Endothelial cell of umbilical vein (primary cell): ENCODE measurements at regions of chr6 and their contacts with region 1.

Region 1: DNA sequence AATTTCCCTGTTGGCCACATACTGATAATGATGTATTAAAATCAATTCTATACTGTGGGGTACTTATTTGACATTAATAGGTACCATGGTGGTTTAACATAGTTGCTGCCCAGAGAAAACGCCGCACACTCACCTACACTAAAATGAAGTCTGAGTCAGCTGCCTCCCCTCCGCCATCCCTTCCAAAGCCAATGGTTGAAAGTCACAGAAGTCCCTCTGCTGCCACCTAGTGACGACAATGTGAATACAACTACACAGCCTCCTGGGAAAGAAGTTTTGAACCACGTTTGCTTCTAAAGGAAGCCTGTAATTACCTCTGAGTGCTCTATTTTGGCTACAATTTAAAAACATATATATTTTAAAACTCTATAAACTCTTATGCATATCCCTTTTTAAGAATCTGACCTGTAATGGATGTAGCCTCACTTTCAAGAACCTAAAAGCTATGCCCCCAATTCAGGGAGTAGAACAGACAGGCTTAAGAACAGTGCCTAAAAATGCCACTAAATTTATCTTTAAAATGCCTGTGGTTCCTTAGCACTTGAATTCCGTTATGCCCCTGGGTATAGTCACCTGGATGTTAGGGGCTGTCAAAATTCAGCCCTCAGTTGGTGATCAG is 20.6 kb upstream of the ECI2 start:
- DNase-seq: peak; percentile 84
- H3K4me3 ChIP-seq: no peak overlapping the region
- H3K27ac ChIP-seq: no peak overlapping the region
- H3K4me1 ChIP-seq: peaks cover 2% of the 10 kb centered on the region
- H3K27me3 ChIP-seq: no peaks in the 10 kb centered on the region
- CTCF ChIP-seq: peak; percentile 73 to 77
- POLR2A ChIP-seq: no peak

Region 2: GRCh38 chr6:3868544-3868943 is 287.4 kb before region 1 on chr6:
- CTCF ChIA-PET with region 1: no interaction called
- POLR2A ChIA-PET with region 1: no interaction called
- dilution Hi-C with region 1: no loop called
- intact Hi-C with region 1: no loop called
- DNase-seq: no peak
- H3K4me3 ChIP-seq: no peak overlapping the region
- H3K27ac ChIP-seq: no peak overlapping the region
- H3K4me1 ChIP-seq: peaks cover under 1% of the 10 kb centered on the region
- H3K27me3 ChIP-seq: no peaks in the 10 kb centered on the region
- CTCF ChIP-seq: no peak
- POLR2A ChIP-seq: no peak

Region 3: DNA sequence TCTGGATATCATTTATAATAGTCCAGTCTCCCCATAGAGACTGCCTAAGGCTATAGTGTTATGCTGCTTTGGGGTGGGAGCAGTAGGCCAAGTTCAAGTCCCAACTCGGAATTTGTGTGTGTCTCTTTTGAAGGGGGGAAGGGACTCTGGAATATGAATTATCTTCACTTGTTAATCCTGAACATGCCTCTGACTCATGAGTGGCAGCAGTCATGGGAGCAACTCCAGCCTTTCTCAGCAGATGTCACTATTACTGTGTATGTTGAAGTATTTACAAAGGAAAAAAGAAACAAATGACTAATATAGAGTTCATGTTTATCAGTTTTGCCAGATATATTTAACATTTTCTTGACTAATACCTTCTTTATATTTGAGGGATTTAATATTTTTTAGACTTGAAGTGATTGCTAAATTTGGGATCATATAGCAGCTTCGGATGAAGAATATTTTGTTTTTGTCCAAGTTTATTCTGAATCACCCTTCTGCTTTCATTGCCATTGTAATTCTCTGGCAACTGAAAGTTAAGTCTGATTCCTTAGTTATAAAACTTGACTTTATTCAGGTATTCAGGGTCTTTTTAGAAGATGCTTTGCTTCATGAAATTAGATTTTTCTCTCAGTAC is 100.4 kb before region 1 on chr6:
- CTCF ChIA-PET with region 1: interaction called, 120 read pairs
- POLR2A ChIA-PET with region 1: no interaction called
- dilution Hi-C with region 1: no loop called
- intact Hi-C with region 1: loop called (anchors 1 kb)
- DNase-seq: peak; percentile 92
- H3K4me3 ChIP-seq: no peak overlapping the region
- H3K27ac ChIP-seq: peak overlapping the region; percentile 41
- H3K4me1 ChIP-seq: peaks cover 22% of the 10 kb centered on the region
- H3K27me3 ChIP-seq: no peaks in the 10 kb centered on the region
- CTCF ChIP-seq: peak; percentile 44 to 59
- POLR2A ChIP-seq: no peak

Region 4: GRCh38 chr6:4102687-4103244 is 53.2 kb before region 1 on chr6:
- CTCF ChIA-PET with region 1: interaction called, 3 read pairs
- POLR2A ChIA-PET with region 1: no interaction called
- dilution Hi-C with region 1: no loop called
- intact Hi-C with region 1: loop called (anchors 10 kb)
- DNase-seq: no peak
- H3K4me3 ChIP-seq: no peak overlapping the region
- H3K27ac ChIP-seq: no peak overlapping the region
- H3K4me1 ChIP-seq: no peaks in the 10 kb centered on the region
- H3K27me3 ChIP-seq: no peaks in the 10 kb centered on the region
- CTCF ChIP-seq: no peak
- POLR2A ChIP-seq: no peak

Region 5: GRCh38 chr6:4125936-4126864 is 29.8 kb before region 1 on chr6:
- CTCF ChIA-PET with region 1: interaction called, 59 read pairs
- POLR2A ChIA-PET with region 1: no interaction called
- dilution Hi-C with region 1: no loop called
- intact Hi-C with region 1: loop called (anchors 1 kb)
- DNase-seq: peak; percentile 83
- H3K4me3 ChIP-seq: no peak overlapping the region
- H3K27ac ChIP-seq: peak overlapping the region; percentile 54
- H3K4me1 ChIP-seq: peaks cover 50% of the 10 kb centered on the region
- H3K27me3 ChIP-seq: no peaks in the 10 kb centered on the region
- CTCF ChIP-seq: peak; percentile 23 to 28
- POLR2A ChIP-seq: peak; percentile 38

Region 6: DNA sequence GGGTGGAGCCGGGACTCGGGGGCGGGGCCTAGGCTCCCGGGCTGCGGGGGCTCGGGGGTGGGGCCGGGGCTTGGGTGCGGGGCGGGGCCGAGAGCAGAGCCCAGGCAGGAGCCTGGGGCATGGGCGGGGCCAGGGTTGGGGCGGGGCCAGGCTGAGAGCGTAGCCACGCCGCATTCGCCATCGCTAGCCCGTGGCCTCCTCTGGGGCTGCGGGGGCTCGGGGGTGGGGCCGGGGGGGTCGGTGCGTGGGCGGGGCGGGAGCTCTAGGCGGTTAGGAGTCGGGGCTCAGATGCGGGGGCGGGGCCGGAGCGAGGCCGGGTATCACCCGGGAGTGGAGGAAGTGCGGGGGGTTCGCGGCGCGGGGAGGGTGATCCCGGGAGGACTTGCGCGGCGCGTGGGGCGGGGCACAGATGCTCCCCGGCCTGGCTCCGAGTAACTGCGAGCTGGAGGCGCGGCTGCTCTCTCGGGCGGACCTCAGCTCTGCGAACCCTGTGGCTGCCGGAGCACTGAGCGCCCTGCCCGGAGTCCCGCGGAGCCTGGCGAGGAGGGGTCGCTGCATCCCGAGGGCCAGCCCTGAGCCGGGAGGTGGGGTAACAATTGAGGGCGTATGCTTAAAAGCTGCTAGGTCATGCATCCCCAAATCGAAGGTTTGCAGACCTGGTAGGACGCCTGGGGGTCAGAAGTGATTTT is 20.1 kb before region 1 on chr6:
- CTCF ChIA-PET with region 1: interaction called, 35 read pairs
- POLR2A ChIA-PET with region 1: no interaction called
- dilution Hi-C with region 1: no loop called
- intact Hi-C with region 1: loop called (anchors 2 kb)
- DNase-seq: peak; percentile 92
- H3K4me3 ChIP-seq: peak overlapping the region; percentile 48 to 75 (median 72)
- H3K27ac ChIP-seq: peak overlapping the region; percentile 24
- H3K4me1 ChIP-seq: peaks cover 22% of the 10 kb centered on the region
- H3K27me3 ChIP-seq: no peaks in the 10 kb centered on the region
- CTCF ChIP-seq: no peak
- POLR2A ChIP-seq: peak; percentile 58

Region 7: DNA sequence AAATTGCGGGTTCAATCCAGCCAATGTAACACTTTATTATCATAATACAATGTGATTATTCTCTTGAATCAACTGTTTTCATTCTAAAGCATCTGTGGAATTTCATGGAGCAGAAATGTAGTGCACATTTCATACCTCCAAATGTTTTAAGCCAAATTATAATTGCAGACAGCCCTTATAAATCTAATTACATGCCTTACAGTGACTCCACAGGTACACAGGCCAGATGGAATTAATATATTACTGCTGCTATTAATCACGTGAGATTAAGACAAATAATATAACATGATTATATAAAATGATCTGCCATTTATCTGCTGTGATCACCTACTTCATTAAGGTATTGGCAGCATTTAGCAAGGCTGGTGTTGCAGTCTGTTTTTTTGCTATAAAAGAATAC is 10.9 kb before region 1 on chr6:
- CTCF ChIA-PET with region 1: interaction called, 35 read pairs
- POLR2A ChIA-PET with region 1: no interaction called
- dilution Hi-C with region 1: no loop called
- intact Hi-C with region 1: no loop called
- DNase-seq: no peak
- H3K4me3 ChIP-seq: no peak overlapping the region
- H3K27ac ChIP-seq: no peak overlapping the region
- H3K4me1 ChIP-seq: no peaks in the 10 kb centered on the region
- H3K27me3 ChIP-seq: no peaks in the 10 kb centered on the region
- CTCF ChIP-seq: no peak
- POLR2A ChIP-seq: no peak